CD8-positive, alpha-beta memory T cell (primary cell): ENCODE measurements at regions of chr2 and their contacts with region 1.

Region 1: GRCh38 chr2:201451292-201452057 is at the starts of genes STRADB and TRAK2:
- DNase-seq: peak; percentile 94 to 97 (median 95)
- H3K4me3 ChIP-seq: peak within 1 kb of the TSS; percentile 99
- H3K4me3 Mint-ChIP-seq: peak within 1 kb of the TSS; percentile 96 to 100 (median 97)
- H3K27ac ChIP-seq: peak within 1 kb of the TSS; percentile 92
- H3K27ac Mint-ChIP-seq: peak within 1 kb of the TSS; percentile 92 to 99 (median 96)
- H3K4me1 ChIP-seq: peaks cover 47% of the 10 kb centered on the region
- H3K4me1 Mint-ChIP-seq: peaks cover 44 to 58% (median 56%) of the 10 kb centered on the region in 3 donors
- H3K27me3 ChIP-seq: no peaks in the 10 kb centered on the region
- H3K27me3 Mint-ChIP-seq: no peaks in the 10 kb centered on the region
- total RNA-seq, gene STRADB: 22.3 to 27.7 TPM
- total RNA-seq, gene TRAK2: 24.9 to 26.0 TPM

Region 2: GRCh38 chr2:200319548-200320337 is 1131.7 kb before region 1 on chr2:
- CTCF ChIA-PET with region 1: no interaction called
- POLR2A ChIA-PET with region 1: interaction called, 15 read pairs
- DNase-seq: no peak
- H3K4me3 ChIP-seq: no peak overlapping the region
- H3K4me3 Mint-ChIP-seq: no peak overlapping the region
- H3K27ac ChIP-seq: no peak overlapping the region
- H3K27ac Mint-ChIP-seq: no peak overlapping the region
- H3K4me1 ChIP-seq: no peaks in the 10 kb centered on the region
- H3K4me1 Mint-ChIP-seq: peaks cover 0 to 3% (median 0%) of the 10 kb centered on the region in 3 donors
- H3K27me3 ChIP-seq: no peaks in the 10 kb centered on the region
- H3K27me3 Mint-ChIP-seq: no peaks in the 10 kb centered on the region

Region 3: DNA sequence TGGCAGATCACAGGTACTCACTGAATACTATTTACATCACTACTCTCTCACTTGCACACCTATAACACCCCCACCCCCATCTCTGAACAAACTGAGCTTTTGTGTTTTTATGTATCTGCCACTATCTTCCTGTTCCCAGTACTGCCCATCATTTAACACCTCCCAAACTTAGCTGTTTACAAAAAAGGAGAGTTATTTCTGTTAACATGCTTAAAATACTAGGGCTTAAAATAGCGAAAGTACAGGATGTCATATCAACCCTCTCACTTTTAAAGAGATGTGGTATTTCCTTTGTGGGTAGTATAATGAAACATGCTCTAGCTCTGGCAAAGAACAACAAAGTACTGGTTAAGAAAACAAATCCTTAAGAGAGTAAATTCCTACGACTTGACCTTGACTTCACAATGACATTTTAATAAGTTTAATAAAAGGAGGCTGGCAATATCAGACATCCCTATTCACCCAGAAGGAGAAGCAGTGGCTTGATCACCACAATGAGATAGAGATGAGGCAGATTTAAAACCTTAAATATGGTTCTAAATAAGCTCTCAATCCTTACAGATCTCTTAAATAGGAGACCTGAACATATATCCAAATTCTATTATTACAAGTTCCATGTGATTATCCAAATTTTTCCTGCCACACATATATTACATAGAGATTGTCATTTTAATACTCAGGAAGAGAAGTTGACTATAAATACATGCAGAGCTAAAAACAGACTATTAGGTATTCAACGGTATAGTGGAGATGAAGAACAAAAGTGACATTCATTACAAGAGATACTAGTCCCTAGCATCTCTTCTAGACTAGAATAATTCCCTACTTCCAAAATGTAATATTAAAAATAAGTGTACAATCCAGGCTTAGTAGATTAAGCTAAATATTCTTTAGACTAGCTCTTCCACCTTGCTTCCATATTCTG is 37.1 kb before region 1 on chr2:
- CTCF ChIA-PET with region 1: interaction called, 7 read pairs
- POLR2A ChIA-PET with region 1: interaction called, 18 read pairs
- DNase-seq: peak in 2 of 5 donors; percentile 22 to 43
- H3K4me3 ChIP-seq: peak overlapping the region; percentile 29
- H3K4me3 Mint-ChIP-seq: no peak overlapping the region
- H3K27ac ChIP-seq: no peak overlapping the region
- H3K27ac Mint-ChIP-seq: no peak overlapping the region
- H3K4me1 ChIP-seq: peaks cover 41% of the 10 kb centered on the region
- H3K4me1 Mint-ChIP-seq: peaks cover 24 to 52% (median 32%) of the 10 kb centered on the region in 3 donors
- H3K27me3 ChIP-seq: no peaks in the 10 kb centered on the region
- H3K27me3 Mint-ChIP-seq: no peaks in the 10 kb centered on the region

Region 4: GRCh38 chr2:201642579-201643215 is 191.2 kb after region 1 on chr2:
- CTCF ChIA-PET with region 1: no interaction called
- POLR2A ChIA-PET with region 1: interaction called, 10 read pairs
- DNase-seq: peak; percentile 77 to 90 (median 87)
- H3K4me3 ChIP-seq: peak overlapping the region; percentile 98
- H3K4me3 Mint-ChIP-seq: peak overlapping the region; percentile 92 to 99 (median 96)
- H3K27ac ChIP-seq: peak overlapping the region; percentile 97
- H3K27ac Mint-ChIP-seq: peak overlapping the region; percentile 93 to 99 (median 99)
- H3K4me1 ChIP-seq: peaks cover 11% of the 10 kb centered on the region
- H3K4me1 Mint-ChIP-seq: peaks cover 9 to 15% (median 13%) of the 10 kb centered on the region in 3 donors
- H3K27me3 ChIP-seq: no peaks in the 10 kb centered on the region
- H3K27me3 Mint-ChIP-seq: no peaks in the 10 kb centered on the region

Region 5: GRCh38 chr2:201780674-201781581 is 329.5 kb after region 1 on chr2 and contains the start of gene ALS2:
- CTCF ChIA-PET with region 1: interaction called, 3 read pairs
- POLR2A ChIA-PET with region 1: interaction called, 13 read pairs
- DNase-seq: peak; percentile 92 to 97 (median 95)
- H3K4me3 ChIP-seq: peak within 1 kb of the TSS; percentile 89
- H3K4me3 Mint-ChIP-seq: peak within 1 kb of the TSS; percentile 94 to 100 (median 98)
- H3K27ac ChIP-seq: peak within 1 kb of the TSS; percentile 97
- H3K27ac Mint-ChIP-seq: peak within 1 kb of the TSS; percentile 94 to 100 (median 99)
- H3K4me1 ChIP-seq: peaks cover 13% of the 10 kb centered on the region
- H3K4me1 Mint-ChIP-seq: peaks cover 19 to 32% (median 28%) of the 10 kb centered on the region in 3 donors
- H3K27me3 ChIP-seq: no peaks in the 10 kb centered on the region
- H3K27me3 Mint-ChIP-seq: peaks cover 5% of the 10 kb centered on the region in 2 donors
- total RNA-seq, gene ALS2: 16.9 to 18.0 TPM